ENCODE measurements at regions of chr17 and their contacts with region 1.

Region 1: DNA sequence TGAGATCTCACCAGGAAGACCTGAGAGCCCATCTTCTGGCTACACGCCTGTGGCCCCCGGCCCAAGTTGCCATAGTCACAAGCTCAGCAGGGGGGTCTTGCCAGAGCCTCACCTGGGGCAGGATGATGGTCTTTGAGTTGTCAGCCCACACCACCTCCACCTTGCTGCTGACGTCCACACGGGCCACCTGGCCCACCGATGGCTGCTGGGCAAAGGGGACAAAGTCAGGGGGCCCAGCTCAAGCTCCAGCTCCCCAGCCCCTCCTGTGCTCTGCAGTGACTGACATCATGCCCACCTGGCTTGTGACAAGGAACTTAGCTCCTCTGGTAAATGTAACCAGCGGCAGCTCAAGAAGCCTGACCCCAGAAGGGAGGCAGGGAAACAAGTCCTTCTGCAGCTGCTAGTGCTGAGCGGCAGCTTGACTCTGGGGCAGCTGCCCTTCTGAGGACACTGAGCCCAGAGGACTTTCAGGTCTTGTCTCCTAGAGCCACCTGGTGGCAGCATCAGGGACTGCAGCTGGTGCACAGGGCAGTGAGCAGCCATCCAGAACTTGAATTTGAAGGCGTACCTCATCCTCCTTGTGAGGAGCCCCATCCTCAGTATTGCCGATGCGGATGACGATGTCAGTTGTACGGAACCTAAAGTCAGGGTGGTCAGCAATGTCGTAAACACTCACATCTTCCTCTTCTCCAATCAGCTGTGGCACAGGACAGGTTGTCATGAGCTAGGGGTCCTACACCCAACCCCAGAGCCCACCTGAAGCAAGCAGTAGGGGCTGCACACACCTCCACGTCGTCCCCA is 13.5 kb downstream of the SPHK1 start:
- DNase-seq: peak; percentile 64
- ATAC-seq: peak; percentile 93
- H3K4me3 ChIP-seq: no peak overlapping the region
- H3K27ac ChIP-seq: no peak overlapping the region
- H3K4me1 ChIP-seq: no peaks in the 10 kb centered on the region
- H3K27me3 ChIP-seq: no peaks in the 10 kb centered on the region
- CTCF ChIP-seq: peak; percentile 97

Region 2: GRCh38 chr17:76261421-76262215 is 136.3 kb before region 1 on chr17:
- CTCF ChIA-PET with region 1: no interaction called
- POLR2A ChIA-PET with region 1: no interaction called
- in situ Hi-C with region 1: no loop called
- intact Hi-C with region 1: no loop called
- DNase-seq: no peak
- ATAC-seq: no peak
- H3K4me3 ChIP-seq: no peak overlapping the region
- H3K27ac ChIP-seq: no peak overlapping the region
- H3K4me1 ChIP-seq: peaks cover 23% of the 10 kb centered on the region
- H3K27me3 ChIP-seq: no peaks in the 10 kb centered on the region
- CTCF ChIP-seq: no peak

Region 3: GRCh38 chr17:76307299-76307965 is 90.5 kb before region 1 on chr17:
- CTCF ChIA-PET with region 1: interaction called, 14 read pairs
- POLR2A ChIA-PET with region 1: no interaction called
- in situ Hi-C with region 1: no loop called
- intact Hi-C with region 1: loop called (anchors 2 kb)
- DNase-seq: no peak
- ATAC-seq: no peak
- H3K4me3 ChIP-seq: no peak overlapping the region
- H3K27ac ChIP-seq: no peak overlapping the region
- H3K4me1 ChIP-seq: peaks cover 5% of the 10 kb centered on the region; the same call in 1 of the 2 replicates
- H3K27me3 ChIP-seq: no peaks in the 10 kb centered on the region
- CTCF ChIP-seq: no peak

Region 4: GRCh38 chr17:76384222-76384986 is 13.5 kb before region 1 on chr17 and contains the start of gene SPHK1:
- CTCF ChIA-PET with region 1: interaction called, 23 read pairs
- POLR2A ChIA-PET with region 1: no interaction called
- in situ Hi-C with region 1: no loop called
- intact Hi-C with region 1: no loop called
- DNase-seq: no peak
- ATAC-seq: peak; percentile 84
- H3K4me3 ChIP-seq: peak within 1 kb of the TSS; percentile 59 to 69
- H3K27ac ChIP-seq: peak within 1 kb of the TSS; percentile 79
- H3K4me1 ChIP-seq: peaks cover 13% of the 10 kb centered on the region; the same call in 1 of the 2 replicates
- H3K27me3 ChIP-seq: no peaks in the 10 kb centered on the region
- CTCF ChIP-seq: no peak
- total RNA-seq, gene SPHK1: 18.2 TPM

Region 5: GRCh38 chr17:76408052-76408849 is 10.4 kb after region 1 on chr17:
- CTCF ChIA-PET with region 1: interaction called, 15 read pairs
- POLR2A ChIA-PET with region 1: no interaction called
- in situ Hi-C with region 1: no loop called
- intact Hi-C with region 1: no loop called
- DNase-seq: no peak
- ATAC-seq: peak; percentile 83
- H3K4me3 ChIP-seq: no peak overlapping the region
- H3K27ac ChIP-seq: no peak overlapping the region
- H3K4me1 ChIP-seq: no peaks in the 10 kb centered on the region
- H3K27me3 ChIP-seq: no peaks in the 10 kb centered on the region
- CTCF ChIP-seq: peak; percentile 97

Region 6: DNA sequence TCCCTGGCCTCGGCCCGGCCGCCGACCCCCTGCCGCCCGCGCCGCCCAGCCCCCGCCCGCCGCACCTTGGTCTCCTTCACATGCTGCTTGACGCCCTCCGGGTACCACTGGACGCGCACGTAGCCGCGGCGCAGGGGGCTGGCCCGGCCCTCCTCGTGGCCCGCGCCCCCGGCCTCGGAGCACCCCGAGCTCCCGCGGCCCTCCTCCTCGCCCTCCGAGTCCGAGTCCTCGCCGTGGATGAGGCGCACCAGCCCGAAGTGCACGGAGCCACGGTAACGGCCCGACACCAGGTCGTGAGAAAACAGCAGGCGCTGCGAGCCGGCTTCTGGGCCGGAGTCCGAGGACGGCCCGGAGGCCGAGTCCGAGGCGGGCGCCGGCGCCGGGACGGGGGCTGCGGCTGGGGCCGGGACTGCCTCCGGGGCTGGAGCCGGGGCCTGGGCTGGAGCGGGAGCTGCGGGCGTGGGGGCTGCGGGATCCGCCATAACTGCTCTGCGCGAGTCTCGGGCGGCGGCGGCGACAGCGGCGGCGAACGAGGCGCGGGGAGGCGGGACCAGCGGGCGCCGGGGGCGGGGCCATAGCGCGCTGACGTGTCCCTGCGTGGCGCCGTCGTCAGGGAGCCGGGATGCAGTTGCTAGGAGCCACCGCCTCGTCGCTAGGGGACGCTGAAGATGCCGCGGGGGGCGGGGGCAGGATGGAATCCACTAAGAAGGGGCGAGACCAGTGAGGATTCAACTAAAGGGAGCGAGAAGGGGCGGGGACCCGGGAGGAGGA is 55.0 kb after region 1 on chr17 and contains the start of gene UBE2O:
- CTCF ChIA-PET with region 1: interaction called, 11 read pairs
- POLR2A ChIA-PET with region 1: no interaction called
- in situ Hi-C with region 1: no loop called
- intact Hi-C with region 1: no loop called
- DNase-seq: no peak
- ATAC-seq: peak; percentile 97
- H3K4me3 ChIP-seq: peak within 1 kb of the TSS; percentile 80 to 88
- H3K27ac ChIP-seq: peak within 1 kb of the TSS; percentile 72
- H3K4me1 ChIP-seq: peaks cover 24% of the 10 kb centered on the region
- H3K27me3 ChIP-seq: no peaks in the 10 kb centered on the region
- CTCF ChIP-seq: peak; percentile 87
- total RNA-seq, gene UBE2O: 47.5 TPM

Measured in Panc1 (cell line).